ENCODE measurements at regions of chr1 and their contacts with region 1.

Region 1: GRCh38 chr1:35298464-35298863 is 30.0 kb downstream of the ZMYM4 start:
- DNase-seq: no peak
- H3K4me3 ChIP-seq: no peak overlapping the region
- H3K27ac ChIP-seq: no peak overlapping the region
- H3K4me1 ChIP-seq: peaks cover 0 to 21% (median 12%) of the 10 kb centered on the region in 4 donors
- H3K27me3 ChIP-seq: no peaks in the 10 kb centered on the region
- CTCF ChIP-seq: peak in 2 of 4 experiments; percentile 24 to 44
- EP300 ChIP-seq: no peak
- POLR2A ChIP-seq: no peak

Region 2: DNA sequence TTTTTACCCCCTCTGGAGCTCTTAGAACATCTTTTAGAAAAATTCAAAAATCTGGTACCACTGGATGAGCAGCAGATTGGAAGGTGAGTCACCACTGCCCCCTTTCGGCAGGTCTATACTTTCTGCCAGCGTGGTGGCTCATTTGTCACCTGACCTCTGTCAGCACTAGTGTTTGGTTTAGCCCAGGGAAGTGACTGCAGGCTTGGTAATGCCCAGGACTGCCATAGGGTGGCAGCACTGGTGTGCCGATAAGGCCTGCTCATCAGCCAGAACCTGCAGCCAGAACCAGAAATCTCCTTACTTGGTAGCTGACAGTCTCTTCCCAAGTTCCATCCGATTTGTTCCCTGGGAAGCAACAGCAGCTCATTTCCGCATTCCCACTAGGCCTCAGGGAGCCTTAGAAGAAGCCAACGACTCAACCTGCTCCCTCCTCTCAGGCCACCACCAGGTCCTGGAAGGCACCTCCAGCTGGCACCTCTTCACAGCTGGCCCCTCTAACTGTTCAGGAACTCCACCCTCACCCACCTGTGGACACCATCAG is 445.7 kb before region 1 on chr1:
- intact Hi-C with region 1: loop called (anchors 10 kb)
- DNase-seq: peak; percentile 91
- H3K4me3 ChIP-seq: no peak overlapping the region
- H3K27ac ChIP-seq: peak overlapping the region; percentile 68 to 75 (median 72)
- H3K4me1 ChIP-seq: peaks cover 0 to 25% (median 13%) of the 10 kb centered on the region in 4 donors
- H3K27me3 ChIP-seq: no peaks in the 10 kb centered on the region
- CTCF ChIP-seq: peak; percentile 75 to 92 (median 78)
- EP300 ChIP-seq: no peak
- POLR2A ChIP-seq: no peak

Region 3: DNA sequence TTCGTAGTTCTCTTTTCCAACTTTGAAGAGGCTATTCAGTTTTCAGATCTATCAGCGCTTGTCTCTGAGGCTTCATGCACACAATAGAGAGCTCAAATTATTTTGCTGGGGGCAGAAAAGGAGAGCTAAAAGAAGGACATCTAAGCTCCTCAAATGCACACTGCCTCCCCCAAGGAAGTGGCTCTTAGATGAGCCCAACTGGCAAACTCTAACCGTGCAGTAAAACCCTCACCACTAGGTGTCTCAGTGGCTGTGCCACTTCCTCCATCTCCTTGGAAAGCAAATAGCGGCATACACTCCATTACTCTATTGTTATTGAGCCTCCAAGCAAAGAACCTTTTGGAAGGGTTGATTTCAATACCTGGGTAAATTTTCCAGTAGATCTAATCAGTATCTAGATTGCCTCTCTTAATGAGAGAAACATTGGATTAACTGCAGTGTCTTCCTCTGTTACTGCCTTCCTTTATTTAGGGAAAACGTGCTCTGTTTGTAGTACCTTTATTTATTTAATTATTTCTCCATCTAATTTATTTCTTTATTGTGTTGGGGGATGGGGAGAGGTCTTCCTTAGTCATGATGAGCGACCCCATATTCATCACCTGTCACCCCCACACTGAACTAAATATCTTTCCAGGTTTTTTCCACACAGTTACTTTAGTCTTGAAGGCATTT is 96.3 kb before region 1 on chr1:
- intact Hi-C with region 1: loop called (anchors 2 kb)
- DNase-seq: peak; percentile 84
- H3K4me3 ChIP-seq: peak overlapping the region in 1 of 4 donors; percentile 4
- H3K27ac ChIP-seq: no peak overlapping the region
- H3K4me1 ChIP-seq: no peaks in the 10 kb centered on the region
- H3K27me3 ChIP-seq: no peaks in the 10 kb centered on the region
- CTCF ChIP-seq: peak; percentile 80 to 89 (median 89)
- EP300 ChIP-seq: no peak
- POLR2A ChIP-seq: no peak

Region 4: DNA sequence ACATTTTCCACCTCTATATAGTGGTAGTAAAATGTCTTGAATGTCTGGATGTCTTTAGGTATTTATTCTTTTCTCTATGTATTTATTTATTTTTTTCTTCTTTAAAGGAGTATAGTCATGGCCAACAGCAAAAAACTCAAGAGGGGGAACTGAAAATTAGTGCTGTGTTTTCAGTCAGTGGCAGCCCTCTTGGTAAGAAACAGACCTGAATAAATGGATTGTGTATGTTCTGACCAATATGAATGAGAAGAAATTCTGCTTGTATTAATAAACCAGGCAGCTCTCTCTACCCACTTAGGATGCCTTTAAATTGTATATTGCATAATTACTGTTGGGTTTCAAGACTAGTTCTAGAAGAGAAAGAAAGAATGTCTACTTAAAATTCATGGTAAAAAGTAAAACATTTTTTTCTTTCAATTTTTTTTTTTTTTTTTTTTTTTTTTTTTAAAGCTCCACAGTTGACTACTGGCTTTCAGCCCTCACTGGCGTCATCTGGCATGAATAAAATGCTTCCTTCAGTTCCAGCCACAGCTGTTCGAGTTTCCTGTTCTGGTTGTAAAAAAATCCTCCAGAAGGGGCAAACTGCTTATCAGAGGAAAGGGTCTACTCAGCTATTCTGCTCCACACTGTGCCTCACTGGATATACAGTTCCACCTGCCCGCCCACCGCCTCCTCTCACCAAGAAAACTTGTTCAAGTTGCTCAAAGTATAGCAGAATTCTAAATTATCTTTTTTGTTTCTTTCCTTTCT is 71.6 kb after region 1 on chr1:
- intact Hi-C with region 1: no loop called
- DNase-seq: peak; percentile 82
- H3K4me3 ChIP-seq: no peak overlapping the region
- H3K27ac ChIP-seq: peak overlapping the region; percentile 28 to 72 (median 61)
- H3K4me1 ChIP-seq: peaks cover 0 to 13% (median 8%) of the 10 kb centered on the region in 4 donors
- H3K27me3 ChIP-seq: no peaks in the 10 kb centered on the region
- CTCF ChIP-seq: no peak
- EP300 ChIP-seq: no peak
- POLR2A ChIP-seq: no peak

Region 5: GRCh38 chr1:35691080-35691479 is 392.6 kb after region 1 on chr1:
- intact Hi-C with region 1: no loop called
- DNase-seq: no peak
- H3K4me3 ChIP-seq: no peak overlapping the region
- H3K27ac ChIP-seq: no peak overlapping the region
- H3K4me1 ChIP-seq: no peaks in the 10 kb centered on the region
- H3K27me3 ChIP-seq: peaks cover 0 to 3% (median 3%) of the 10 kb centered on the region in 3 donors
- CTCF ChIP-seq: no peak
- EP300 ChIP-seq: no peak
- POLR2A ChIP-seq: no peak